ENCODE measurements at regions of chr6 and their contacts with region 1.

Region 1: GRCh38 chr6:39724787-39725631 is at the start of gene KIF6:
- DNase-seq: peak; percentile 96
- ATAC-seq: peak; percentile 99
- total RNA-seq, gene KIF6: 0.16 TPM

Region 2: GRCh38 chr6:39791850-39792539 is 67.0 kb after region 1 on chr6 and contains the start of gene DAAM2:
- intact Hi-C with region 1: no loop called
- DNase-seq: peak; percentile 80
- ATAC-seq: peak; percentile 92
- total RNA-seq, gene DAAM2: 14.7 TPM

Region 3: DNA sequence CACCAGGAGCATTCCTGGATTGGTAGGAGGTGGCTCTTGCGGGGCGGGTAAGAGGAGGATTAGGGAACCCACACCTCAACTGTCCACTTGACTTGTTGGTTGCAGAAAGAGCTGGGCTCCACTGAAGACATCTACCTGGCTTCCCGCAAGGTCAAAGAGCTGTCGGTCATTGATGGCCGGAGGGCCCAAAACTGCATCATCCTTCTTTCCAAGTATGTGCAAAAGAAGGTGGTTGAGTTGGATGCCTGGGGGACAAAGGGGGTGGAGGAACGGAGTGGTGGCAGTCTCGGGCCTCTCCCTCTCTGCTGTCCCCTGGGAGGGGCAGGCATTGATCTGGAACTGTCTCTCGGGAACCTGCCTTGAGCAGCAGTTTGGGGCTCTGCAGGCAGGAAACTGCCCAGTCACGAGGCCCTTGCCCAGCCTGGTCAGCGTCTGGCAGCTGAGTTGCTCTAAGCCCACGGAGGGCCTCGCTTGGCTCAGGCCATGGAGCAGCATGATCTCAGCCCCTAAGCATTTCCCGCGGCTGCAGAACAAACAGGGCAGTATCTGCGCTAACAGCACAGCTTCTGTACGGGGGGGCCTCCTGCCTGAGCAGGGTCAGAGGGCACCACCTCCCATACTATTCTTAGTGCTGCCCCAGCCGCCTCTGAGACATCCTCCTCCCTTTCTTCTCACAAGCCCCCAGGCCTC is 162.5 kb after region 1 on chr6:
- intact Hi-C with region 1: loop called (anchors 10 kb)
- DNase-seq: peak; percentile 88
- ATAC-seq: peak; percentile 91

Measured in Right ventricle myocardium inferior (tissue), 1 donor.